Transverse colon (tissue), 4 donors: ENCODE measurements at regions of chr16 and their contacts with region 1.

Region 1: DNA sequence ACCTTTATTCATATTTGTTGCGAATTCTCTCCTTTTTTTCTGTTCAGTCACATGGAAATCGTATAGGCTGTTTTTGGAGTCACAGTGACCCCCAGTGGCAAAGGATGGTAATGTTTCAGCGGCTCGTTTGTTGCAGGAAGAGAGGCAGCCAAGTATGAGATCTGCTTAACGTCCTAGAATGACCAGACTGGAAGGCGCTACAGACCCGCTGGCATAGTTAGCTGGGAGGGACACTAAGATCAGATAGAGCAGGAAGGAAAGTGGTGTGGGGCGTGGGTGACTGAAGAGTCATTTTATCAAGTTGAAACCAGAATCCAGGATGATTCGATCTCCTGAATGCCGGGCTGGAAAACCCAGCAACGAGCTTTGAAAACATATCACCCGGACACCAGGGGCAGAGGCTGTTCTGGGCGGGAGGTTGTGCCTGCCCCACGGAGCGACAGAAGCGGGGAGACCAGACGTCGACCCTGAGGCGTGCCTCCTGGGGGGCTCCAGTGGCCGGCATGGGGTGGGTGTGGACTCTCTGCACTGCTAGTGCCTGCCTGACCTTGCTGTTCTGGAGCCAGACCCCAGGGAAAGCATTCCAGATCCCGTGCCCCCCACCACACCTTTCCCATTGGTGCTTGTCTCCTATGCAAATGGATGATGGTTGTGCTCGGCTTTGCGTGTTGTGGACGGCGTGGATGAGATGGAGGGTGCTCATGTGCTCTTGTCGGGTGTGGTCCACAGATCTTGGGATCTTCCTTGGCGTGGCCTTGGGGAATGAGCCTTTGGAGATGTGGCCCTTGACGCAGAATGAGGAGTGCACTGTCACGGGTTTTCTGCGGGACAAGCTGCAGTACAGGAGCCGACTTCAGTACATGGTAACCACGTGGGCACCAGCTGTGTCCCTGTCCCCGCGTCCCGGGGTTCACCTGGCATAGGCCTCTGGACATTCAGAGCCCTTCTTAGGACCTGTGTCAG is 7.7 kb downstream of the IL34 start:
- DNase-seq: peak; percentile 87
- H3K4me3 ChIP-seq: peak overlapping the region in 1 of 4 donors; percentile 37
- H3K27ac ChIP-seq: peak overlapping the region in 3 of 4 donors; percentile 13 to 55 (median 30)
- H3K4me1 ChIP-seq: peaks cover 0 to 10% (median 4%) of the 10 kb centered on the region in 4 donors
- H3K27me3 ChIP-seq: no peaks in the 10 kb centered on the region
- CTCF ChIP-seq: peak; percentile 87 to 98 (median 92)
- EP300 ChIP-seq: no peak
- POLR2A ChIP-seq: no peak

Region 2: DNA sequence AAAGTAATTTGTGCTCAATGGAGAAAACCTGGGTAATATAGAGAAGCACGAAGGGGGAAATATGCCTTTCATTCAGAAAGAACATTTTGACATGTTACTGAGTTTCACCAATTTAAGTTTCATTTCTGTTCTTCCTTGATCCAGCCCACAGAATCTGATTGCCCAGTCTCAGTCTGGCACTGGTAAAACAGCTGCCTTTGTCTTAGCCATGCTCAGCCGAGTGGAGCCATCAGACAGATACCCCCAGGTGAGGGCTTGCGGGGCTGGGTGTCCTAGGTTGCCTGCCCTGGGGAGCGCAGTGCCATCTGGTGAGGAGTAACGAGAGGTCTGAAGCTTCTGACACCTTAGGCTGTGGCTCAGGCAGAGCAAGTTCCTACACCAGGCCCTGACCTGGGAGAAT is 289.7 kb before region 1 on chr16:
- in situ Hi-C with region 1: loop called in 3 of 4 experiments (anchors 10 to 25 kb)
- intact Hi-C with region 1: loop called (anchors 10 kb)
- DNase-seq: no peak
- H3K4me3 ChIP-seq: no peak overlapping the region
- H3K27ac ChIP-seq: no peak overlapping the region
- H3K4me1 ChIP-seq: no peaks in the 10 kb centered on the region
- H3K27me3 ChIP-seq: no peaks in the 10 kb centered on the region
- CTCF ChIP-seq: no peak
- EP300 ChIP-seq: no peak
- POLR2A ChIP-seq: no peak

Region 3: GRCh38 chr16:70523076-70523742 is 130.9 kb before region 1 on chr16 and contains the start of gene COG4:
- in situ Hi-C with region 1: loop called in 1 of 4 experiments (anchors 10 kb)
- intact Hi-C with region 1: loop called (anchors 2 kb)
- DNase-seq: peak; percentile 89
- H3K4me3 ChIP-seq: peak within 1 kb of the TSS; percentile 78 to 95 (median 88)
- H3K27ac ChIP-seq: peak within 1 kb of the TSS; percentile 85 to 94 (median 90)
- H3K4me1 ChIP-seq: peaks cover 13 to 43% (median 32%) of the 10 kb centered on the region in 4 donors
- H3K27me3 ChIP-seq: no peaks in the 10 kb centered on the region
- CTCF ChIP-seq: no peak
- EP300 ChIP-seq: no peak
- POLR2A ChIP-seq: no peak
- total RNA-seq, gene COG4: 55.4 to 200 (median 64.0) TPM

Region 4: GRCh38 chr16:70529051-70529777 is 124.9 kb before region 1 on chr16:
- in situ Hi-C with region 1: loop called in 2 of 4 experiments (anchors 10 kb)
- intact Hi-C with region 1: loop called (anchors 2 kb)
- DNase-seq: no peak
- H3K4me3 ChIP-seq: no peak overlapping the region
- H3K27ac ChIP-seq: no peak overlapping the region
- H3K4me1 ChIP-seq: peaks cover 8 to 40% (median 25%) of the 10 kb centered on the region in 4 donors
- H3K27me3 ChIP-seq: no peaks in the 10 kb centered on the region
- CTCF ChIP-seq: peak; percentile 37 to 46 (median 42)
- EP300 ChIP-seq: no peak
- POLR2A ChIP-seq: no peak

Region 5: GRCh38 chr16:70534971-70535370 is 119.1 kb before region 1 on chr16:
- in situ Hi-C with region 1: loop called in 1 of 4 experiments (anchors 10 kb)
- intact Hi-C with region 1: no loop called
- DNase-seq: no peak
- H3K4me3 ChIP-seq: no peak overlapping the region
- H3K27ac ChIP-seq: no peak overlapping the region
- H3K4me1 ChIP-seq: no peaks in the 10 kb centered on the region
- H3K27me3 ChIP-seq: no peaks in the 10 kb centered on the region
- CTCF ChIP-seq: no peak
- EP300 ChIP-seq: no peak
- POLR2A ChIP-seq: no peak

Region 6: DNA sequence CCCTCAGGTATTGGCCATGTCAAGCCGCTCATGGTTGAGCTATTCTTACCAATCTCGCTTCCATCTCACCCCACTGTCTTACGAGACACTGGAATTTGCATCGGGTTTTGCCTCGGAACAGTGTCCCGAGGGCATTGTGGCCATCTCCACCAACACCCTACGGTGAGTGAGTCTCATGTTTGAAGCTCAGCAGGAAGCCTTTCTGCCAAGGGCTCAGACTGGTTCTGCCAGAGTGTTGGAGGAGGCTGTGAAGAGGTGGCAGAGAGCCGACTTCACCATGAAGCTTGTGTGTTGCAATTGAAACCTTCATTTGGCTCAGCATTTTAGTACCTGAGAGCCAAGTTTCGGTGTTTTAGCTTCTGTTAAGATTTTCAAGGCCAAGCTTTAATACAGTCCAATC is 92.5 kb before region 1 on chr16:
- in situ Hi-C with region 1: no loop called
- intact Hi-C with region 1: loop called (anchors 10 kb)
- DNase-seq: no peak
- H3K4me3 ChIP-seq: no peak overlapping the region
- H3K27ac ChIP-seq: no peak overlapping the region
- H3K4me1 ChIP-seq: no peaks in the 10 kb centered on the region
- H3K27me3 ChIP-seq: no peaks in the 10 kb centered on the region
- CTCF ChIP-seq: no peak
- EP300 ChIP-seq: no peak
- POLR2A ChIP-seq: no peak